Ovary (tissue), 10 donors: ENCODE measurements at regions of chr15 and their contacts with region 1.

Region 1: GRCh38 chr15:101307048-101307896 is 12.2 kb upstream of the SNRPA1 start:
- DNase-seq: no peak
- H3K4me3 ChIP-seq: no peak overlapping the region
- H3K27ac ChIP-seq: no peak overlapping the region
- H3K4me1 ChIP-seq: no peaks in the 10 kb centered on the region
- H3K27me3 ChIP-seq: no peaks in the 10 kb centered on the region
- CTCF ChIP-seq: no peak
- EP300 ChIP-seq: no peak
- POLR2A ChIP-seq: no peak

Region 2: GRCh38 chr15:100968050-100968966 is 339.0 kb before region 1 on chr15:
- intact Hi-C with region 1: no loop called
- DNase-seq: no peak
- H3K4me3 ChIP-seq: no peak overlapping the region
- H3K27ac ChIP-seq: no peak overlapping the region
- H3K4me1 ChIP-seq: peaks cover 4% of the 10 kb centered on the region
- H3K27me3 ChIP-seq: no peaks in the 10 kb centered on the region
- CTCF ChIP-seq: no peak
- EP300 ChIP-seq: no peak
- POLR2A ChIP-seq: no peak

Region 3: DNA sequence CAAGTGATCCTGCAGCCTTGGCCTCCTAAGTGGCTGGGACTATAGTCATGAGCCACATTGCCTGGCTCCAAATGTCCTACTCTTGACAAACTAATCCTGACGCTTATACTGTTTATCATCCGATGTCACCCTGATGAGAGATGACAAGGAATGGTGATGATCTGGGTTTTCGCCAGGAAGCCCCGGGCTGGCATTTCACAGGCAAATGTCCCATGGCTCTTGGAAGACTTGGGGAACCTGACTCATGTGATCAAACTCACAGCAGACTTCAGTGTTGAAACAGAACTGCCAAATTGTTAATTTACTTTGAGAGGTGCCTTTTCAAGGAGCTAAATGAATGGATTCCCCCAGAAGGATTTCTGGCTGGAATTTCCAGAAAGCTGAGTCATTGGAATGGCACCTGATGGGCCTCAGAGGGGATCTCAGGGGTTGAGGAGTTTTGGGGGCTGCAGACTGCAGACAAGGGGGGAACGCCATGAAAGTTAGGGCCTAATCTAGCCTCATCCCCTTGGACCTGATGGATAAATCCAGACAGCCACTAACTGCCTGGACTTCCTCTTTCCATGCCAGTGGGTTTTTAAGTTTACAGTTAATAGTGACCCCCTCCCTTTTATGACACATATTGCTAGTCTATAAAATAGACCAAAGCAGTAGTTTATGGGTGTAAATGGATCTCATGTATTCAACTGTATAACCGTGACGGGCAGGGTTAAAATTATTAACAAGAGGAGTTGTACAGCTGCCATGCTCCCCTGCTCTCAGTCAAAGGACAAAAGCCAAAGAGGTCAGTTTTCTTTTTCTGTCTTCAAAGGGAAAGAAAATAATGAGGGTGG is 202.0 kb before region 1 on chr15:
- intact Hi-C with region 1: no loop called
- DNase-seq: no peak
- H3K4me3 ChIP-seq: no peak overlapping the region
- H3K27ac ChIP-seq: no peak overlapping the region
- H3K4me1 ChIP-seq: no peaks in the 10 kb centered on the region
- H3K27me3 ChIP-seq: no peaks in the 10 kb centered on the region
- CTCF ChIP-seq: no peak
- EP300 ChIP-seq: no peak
- POLR2A ChIP-seq: no peak

Region 4: GRCh38 chr15:101152914-101153313 is 154.4 kb before region 1 on chr15:
- intact Hi-C with region 1: no loop called
- DNase-seq: peak in 1 of 5 donors; percentile 27
- H3K4me3 ChIP-seq: no peak overlapping the region
- H3K27ac ChIP-seq: no peak overlapping the region
- H3K4me1 ChIP-seq: no peaks in the 10 kb centered on the region
- H3K27me3 ChIP-seq: no peaks in the 10 kb centered on the region
- CTCF ChIP-seq: no peak
- EP300 ChIP-seq: no peak
- POLR2A ChIP-seq: no peak

Region 5: GRCh38 chr15:101455291-101456025 is 148.2 kb after region 1 on chr15:
- intact Hi-C with region 1: no loop called
- DNase-seq: no peak
- H3K4me3 ChIP-seq: no peak overlapping the region
- H3K27ac ChIP-seq: no peak overlapping the region
- H3K4me1 ChIP-seq: peaks cover 10% of the 10 kb centered on the region
- H3K27me3 ChIP-seq: no peaks in the 10 kb centered on the region
- CTCF ChIP-seq: no peak
- EP300 ChIP-seq: no peak
- POLR2A ChIP-seq: no peak

Region 6: DNA sequence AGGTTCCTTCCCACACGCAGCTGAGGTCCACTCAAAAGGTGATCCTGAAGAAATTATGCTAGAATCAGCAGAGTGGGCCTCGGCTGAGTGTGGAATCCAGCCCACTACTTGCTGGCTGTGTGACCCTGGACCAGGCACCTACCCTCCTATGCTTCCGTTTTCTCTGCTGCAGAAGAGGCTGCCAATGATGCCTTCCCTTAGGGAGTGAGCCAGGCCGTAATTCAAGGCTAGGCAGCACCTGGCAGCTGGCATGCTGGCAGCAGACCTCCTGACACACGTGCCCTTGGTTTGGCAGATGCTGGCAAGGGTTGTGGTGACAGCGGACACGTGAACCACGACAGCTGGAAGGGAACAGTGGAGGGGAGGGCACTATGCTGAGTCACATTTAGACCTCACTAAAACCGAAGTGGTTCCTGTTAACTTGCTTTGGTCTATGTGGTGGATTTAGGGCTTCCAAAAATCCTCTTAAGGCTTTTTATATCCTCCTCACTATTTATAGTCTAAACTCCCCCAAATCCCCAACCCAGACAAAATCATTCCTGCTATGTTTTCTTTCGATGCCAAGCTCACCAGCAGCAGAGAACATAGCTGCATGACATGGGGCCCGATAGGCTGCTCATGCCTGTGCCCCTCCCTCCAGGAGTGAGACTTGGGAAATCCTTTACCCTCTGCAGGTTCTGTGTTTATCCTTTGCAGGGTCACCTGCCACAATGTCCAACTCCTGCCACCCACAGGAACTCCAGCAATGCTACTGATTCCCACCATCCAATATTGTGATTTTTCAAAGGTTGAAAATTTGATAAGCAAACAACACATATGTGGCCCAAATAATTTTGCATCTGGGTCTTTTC is 192.8 kb after region 1 on chr15:
- intact Hi-C with region 1: loop called in 2 of 4 experiments (anchors 5 to 10 kb)
- DNase-seq: no peak
- H3K4me3 ChIP-seq: no peak overlapping the region
- H3K27ac ChIP-seq: no peak overlapping the region
- H3K4me1 ChIP-seq: peaks cover 4% of the 10 kb centered on the region
- H3K27me3 ChIP-seq: no peaks in the 10 kb centered on the region
- CTCF ChIP-seq: no peak
- EP300 ChIP-seq: no peak
- POLR2A ChIP-seq: no peak

Region 7: GRCh38 chr15:101641166-101641764 is 334.0 kb after region 1 on chr15:
- intact Hi-C with region 1: loop called in 2 of 4 experiments (anchors 5 kb)
- DNase-seq: peak; percentile 50 to 82 (median 77)
- H3K4me3 ChIP-seq: no peak overlapping the region
- H3K27ac ChIP-seq: no peak overlapping the region
- H3K4me1 ChIP-seq: no peaks in the 10 kb centered on the region
- H3K27me3 ChIP-seq: no peaks in the 10 kb centered on the region
- CTCF ChIP-seq: peak; percentile 84 to 90 (median 84)
- EP300 ChIP-seq: no peak
- POLR2A ChIP-seq: no peak